Mammary epithelial cell (primary cell): ENCODE measurements at regions of chr16 and their contacts with region 1.

Region 1: GRCh38 chr16:66416939-66417700 is 10.0 kb upstream of the BEAN1 start:
- DNase-seq: peak; percentile 75
- H3K4me3 ChIP-seq: no peak overlapping the region
- H3K27ac ChIP-seq: no peak overlapping the region
- H3K4me1 ChIP-seq: peaks cover 4% of the 10 kb centered on the region
- H3K27me3 ChIP-seq: no peaks in the 10 kb centered on the region
- CTCF ChIP-seq: no peak

Region 2: GRCh38 chr16:66457888-66458287 is 40.8 kb after region 1 on chr16:
- CTCF ChIA-PET with region 1: no interaction called
- dilution Hi-C with region 1: loop called (anchors 5 kb)
- in situ Hi-C with region 1: no loop called
- intact Hi-C with region 1: no loop called
- DNase-seq: peak; percentile 37
- H3K4me3 ChIP-seq: no peak overlapping the region
- H3K27ac ChIP-seq: no peak overlapping the region
- H3K4me1 ChIP-seq: peaks cover 8% of the 10 kb centered on the region
- H3K27me3 ChIP-seq: no peaks in the 10 kb centered on the region
- CTCF ChIP-seq: no peak

Region 3: GRCh38 chr16:66521951-66522771 is 105.0 kb after region 1 on chr16:
- CTCF ChIA-PET with region 1: no interaction called
- dilution Hi-C with region 1: loop called (anchors 5 kb)
- in situ Hi-C with region 1: no loop called
- intact Hi-C with region 1: no loop called
- DNase-seq: peak; percentile 100
- H3K4me3 ChIP-seq: no peak overlapping the region
- H3K27ac ChIP-seq: peak overlapping the region; percentile 69
- H3K4me1 ChIP-seq: peaks cover 68% of the 10 kb centered on the region
- H3K27me3 ChIP-seq: no peaks in the 10 kb centered on the region
- CTCF ChIP-seq: no peak